Panc1 (cell line): ENCODE measurements at regions of chr15 and their contacts with region 1.

Region 1: DNA sequence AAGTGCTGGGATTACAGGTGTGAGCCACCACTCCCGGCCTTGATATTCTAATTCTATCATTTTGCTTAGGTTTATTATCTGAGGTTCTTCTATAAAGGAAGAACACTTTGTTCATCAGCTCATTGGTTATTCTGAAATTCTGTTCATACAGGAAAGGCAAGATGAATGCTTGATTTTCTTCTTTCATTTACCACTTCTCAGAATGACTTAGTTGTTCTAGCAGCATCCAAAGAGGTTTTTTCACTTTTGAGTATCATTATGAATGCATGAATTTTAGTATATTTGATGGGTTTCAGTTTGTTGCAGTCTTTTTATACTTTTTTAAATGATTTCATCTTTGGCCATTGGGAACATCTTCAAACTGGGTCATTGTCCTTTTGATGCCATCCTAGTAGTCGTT is 51.8 kb downstream of the RNF111 start:
- DNase-seq: no peak
- ATAC-seq: no peak
- H3K4me3 ChIP-seq: no peak overlapping the region
- H3K27ac ChIP-seq: no peak overlapping the region
- H3K4me1 ChIP-seq: no peaks in the 10 kb centered on the region
- H3K27me3 ChIP-seq: no peaks in the 10 kb centered on the region
- CTCF ChIP-seq: no peak

Region 2: GRCh38 chr15:58933281-58934113 is 105.7 kb before region 1 on chr15 and contains the start of gene SLTM:
- CTCF ChIA-PET with region 1: no interaction called
- POLR2A ChIA-PET with region 1: no interaction called
- in situ Hi-C with region 1: no loop called
- intact Hi-C with region 1: no loop called
- DNase-seq: peak; percentile 76
- ATAC-seq: peak; percentile 99
- H3K4me3 ChIP-seq: peak within 1 kb of the TSS; percentile 94 to 98
- H3K27ac ChIP-seq: peak within 1 kb of the TSS; percentile 99
- H3K4me1 ChIP-seq: peaks cover 15% of the 10 kb centered on the region
- H3K27me3 ChIP-seq: no peaks in the 10 kb centered on the region
- CTCF ChIP-seq: no peak
- total RNA-seq, gene SLTM: 75.7 TPM

Region 3: DNA sequence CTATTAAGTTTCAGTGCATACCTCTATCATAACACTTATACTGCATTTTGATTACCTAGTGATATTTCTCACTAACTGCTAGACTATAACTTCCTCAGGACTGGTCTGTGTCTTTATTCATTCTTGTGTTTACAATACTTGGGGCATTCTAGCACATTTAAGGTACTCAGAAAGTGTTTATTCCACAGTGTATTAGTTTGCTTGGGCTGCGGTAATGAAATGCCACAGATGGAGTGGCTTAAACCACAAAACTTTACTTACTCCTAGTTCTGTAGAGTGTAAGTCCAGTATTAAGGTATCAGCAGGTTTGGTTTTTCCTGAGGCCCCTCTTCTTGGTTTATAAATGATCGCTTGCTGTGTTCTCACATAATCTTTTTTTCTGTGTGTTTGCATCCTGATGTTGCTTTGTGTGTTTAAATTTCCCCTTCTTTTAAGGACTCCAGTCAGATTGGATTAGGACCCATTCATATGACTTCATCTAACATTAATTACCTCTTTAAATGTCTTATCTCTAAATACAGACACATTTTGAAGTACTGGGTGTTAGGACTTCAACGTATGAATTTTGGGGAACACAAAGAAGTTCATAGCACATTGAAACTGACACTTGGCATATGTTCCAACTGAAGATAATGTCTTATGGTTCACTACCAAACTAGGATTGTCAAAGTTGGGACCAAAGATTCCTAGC is 27.8 kb before region 1 on chr15:
- CTCF ChIA-PET with region 1: no interaction called
- POLR2A ChIA-PET with region 1: no interaction called
- in situ Hi-C with region 1: no loop called
- intact Hi-C with region 1: no loop called
- DNase-seq: no peak
- ATAC-seq: no peak
- H3K4me3 ChIP-seq: no peak overlapping the region
- H3K27ac ChIP-seq: no peak overlapping the region
- H3K4me1 ChIP-seq: no peaks in the 10 kb centered on the region
- H3K27me3 ChIP-seq: no peaks in the 10 kb centered on the region
- CTCF ChIP-seq: no peak

Region 4: DNA sequence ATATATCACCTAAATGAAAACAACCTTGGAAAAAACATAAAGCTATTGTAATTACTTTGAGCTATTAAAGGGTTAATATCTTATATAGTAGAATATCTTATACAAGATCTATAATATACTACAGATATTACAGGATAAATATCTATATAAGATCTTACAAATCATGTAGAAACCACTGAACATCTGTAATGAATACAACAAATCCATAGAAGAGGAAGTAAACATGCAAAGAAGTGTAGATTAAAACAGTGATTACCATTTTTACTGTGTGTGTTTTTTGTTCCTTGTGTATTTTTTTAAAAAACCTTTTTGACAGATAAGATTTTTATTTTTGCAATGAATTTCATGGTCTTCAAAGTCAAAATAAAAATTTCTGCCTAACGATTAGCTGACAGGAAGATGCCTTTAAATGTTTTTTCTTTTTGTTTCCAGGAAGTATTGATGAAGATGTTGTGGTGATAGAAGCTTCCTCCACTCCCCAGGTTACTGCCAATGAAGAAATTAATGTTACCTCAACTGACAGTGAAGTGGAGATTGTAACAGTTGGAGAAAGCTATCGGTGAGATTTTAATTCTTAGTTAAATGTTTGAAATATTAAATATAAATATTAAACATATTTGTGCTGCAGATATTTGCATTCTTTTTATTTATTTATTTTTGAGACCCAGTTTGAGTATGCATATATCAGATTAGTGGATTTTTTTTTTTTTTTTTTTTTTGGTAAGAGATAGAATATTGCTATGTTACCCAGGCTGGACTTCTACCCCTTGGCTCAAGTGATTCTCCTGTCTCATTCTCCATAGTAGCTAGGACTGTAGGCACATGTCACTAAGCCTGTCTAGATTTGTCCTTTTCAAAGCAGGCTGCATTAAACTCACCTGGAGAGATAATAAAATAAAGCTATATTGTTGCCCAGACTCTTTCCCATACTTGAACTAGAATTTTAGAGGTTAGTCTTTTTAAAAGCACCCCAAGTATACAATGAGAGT is 12.9 kb after region 1 on chr15:
- CTCF ChIA-PET with region 1: no interaction called
- POLR2A ChIA-PET with region 1: interaction called, 18 read pairs
- in situ Hi-C with region 1: no loop called
- intact Hi-C with region 1: no loop called
- DNase-seq: no peak
- ATAC-seq: no peak
- H3K4me3 ChIP-seq: no peak overlapping the region
- H3K27ac ChIP-seq: no peak overlapping the region
- H3K4me1 ChIP-seq: no peaks in the 10 kb centered on the region
- H3K27me3 ChIP-seq: no peaks in the 10 kb centered on the region
- CTCF ChIP-seq: no peak